Activated naive CD4-positive, alpha-beta T cell treated with anti-CD3 and anti-CD28 coated beads for 36 hours (primary cell): ENCODE measurements at regions of chr2 and their contacts with region 1.

Region 1: GRCh38 chr2:165293440-165294353 is 54.5 kb downstream of the SCN2A start:
- DNase-seq: peak; percentile 52
- H3K4me3 Mint-ChIP-seq: no peak overlapping the region
- H3K27ac Mint-ChIP-seq: no peak overlapping the region
- H3K4me1 Mint-ChIP-seq: peaks cover 5% of the 10 kb centered on the region
- H3K27me3 Mint-ChIP-seq: peaks cover 10% of the 10 kb centered on the region

Region 2: GRCh38 chr2:165277860-165278656 is 15.6 kb before region 1 on chr2:
- CTCF ChIA-PET with region 1: interaction called, 4 read pairs
- intact Hi-C with region 1: loop called (anchors 2 kb)
- DNase-seq: peak; percentile 10
- H3K4me3 Mint-ChIP-seq: no peak overlapping the region
- H3K27ac Mint-ChIP-seq: peak overlapping the region; percentile 16
- H3K4me1 Mint-ChIP-seq: peaks cover 15% of the 10 kb centered on the region
- H3K27me3 Mint-ChIP-seq: peaks cover 5% of the 10 kb centered on the region

Region 3: GRCh38 chr2:165794536-165794928 is 500.8 kb after region 1 on chr2:
- CTCF ChIA-PET with region 1: no interaction called
- intact Hi-C with region 1: loop called (anchors 10 kb)
- DNase-seq: peak; percentile 78
- H3K4me3 Mint-ChIP-seq: peak overlapping the region; percentile 82
- H3K27ac Mint-ChIP-seq: peak overlapping the region; percentile 78
- H3K4me1 Mint-ChIP-seq: peaks cover 15% of the 10 kb centered on the region
- H3K27me3 Mint-ChIP-seq: peaks cover 32% of the 10 kb centered on the region